Ascending aorta (tissue), 2 donors: ENCODE measurements at regions of chr20 and their contacts with region 1.

Region 1: GRCh38 chr20:10654630-10655029 is 19.2 kb downstream of the JAG1 start:
- DNase-seq: no peak
- H3K4me3 ChIP-seq: peak overlapping the region in 1 of 2 donors; percentile 54
- H3K27ac ChIP-seq: peak overlapping the region; percentile 93 to 100
- H3K4me1 ChIP-seq: peaks cover 28 to 96% of the 10 kb centered on the region in 2 donors
- H3K27me3 ChIP-seq: no peaks in the 10 kb centered on the region
- CTCF ChIP-seq: no peak

Region 2: DNA sequence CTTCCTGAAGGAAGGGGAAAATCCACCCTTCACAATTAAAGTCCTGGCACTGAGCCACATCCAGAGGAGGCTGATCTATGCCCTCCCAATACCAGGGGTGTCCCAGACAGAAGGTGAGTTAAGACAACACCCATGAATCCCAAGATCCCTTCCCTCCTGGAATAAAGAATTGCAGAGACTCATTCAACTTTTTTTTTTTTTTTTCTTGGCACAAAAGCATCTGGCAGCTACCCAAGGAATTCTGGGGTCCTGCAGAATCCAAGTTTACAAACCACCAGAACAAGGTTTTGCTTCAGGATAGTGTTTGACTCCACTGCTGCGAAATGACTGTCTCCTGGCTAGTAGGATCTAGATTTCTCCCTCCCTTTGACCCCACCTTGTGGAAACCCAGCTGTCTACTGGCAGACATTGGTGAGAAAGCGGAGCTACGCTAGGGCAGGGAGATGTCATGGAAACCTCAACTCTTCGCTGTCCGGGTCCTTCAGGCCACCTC is 18.3 kb before region 1 on chr20:
- intact Hi-C with region 1: loop called (anchors 2 kb)
- DNase-seq: peak in 1 of 2 donors; percentile 68
- H3K4me3 ChIP-seq: peak overlapping the region in 1 of 2 donors; percentile 53
- H3K27ac ChIP-seq: peak overlapping the region; percentile 93 to 100
- H3K4me1 ChIP-seq: peaks cover 29 to 57% of the 10 kb centered on the region in 2 donors
- H3K27me3 ChIP-seq: no peaks in the 10 kb centered on the region
- CTCF ChIP-seq: no peak

Region 3: DNA sequence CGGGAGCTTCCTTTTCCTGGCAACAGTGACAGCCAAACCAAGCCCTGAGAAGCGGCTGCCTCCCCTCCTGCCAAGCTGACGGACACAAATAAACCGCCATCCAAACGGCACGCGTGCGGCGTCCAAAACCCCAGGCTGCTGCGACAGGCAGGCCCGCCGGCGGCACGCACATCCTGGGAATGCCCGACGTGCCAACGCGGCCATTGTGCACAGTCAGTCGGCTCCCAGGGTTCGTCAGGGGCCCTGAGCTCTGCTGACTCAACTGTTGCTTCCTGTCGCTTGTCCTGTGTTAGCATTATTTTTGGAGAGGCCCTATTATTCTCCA is 12.4 kb after region 1 on chr20:
- intact Hi-C with region 1: loop called (anchors 2 kb)
- DNase-seq: peak in 1 of 2 donors; percentile 84
- H3K4me3 ChIP-seq: peak overlapping the region; percentile 39 to 86
- H3K27ac ChIP-seq: peak overlapping the region; percentile 93 to 100
- H3K4me1 ChIP-seq: peaks cover 23 to 61% of the 10 kb centered on the region in 2 donors
- H3K27me3 ChIP-seq: no peaks in the 10 kb centered on the region
- CTCF ChIP-seq: no peak

Region 4: GRCh38 chr20:10769700-10770099 is 115.1 kb after region 1 on chr20:
- intact Hi-C with region 1: no loop called
- DNase-seq: no peak
- H3K4me3 ChIP-seq: no peak overlapping the region
- H3K27ac ChIP-seq: no peak overlapping the region
- H3K4me1 ChIP-seq: no peaks in the 10 kb centered on the region
- H3K27me3 ChIP-seq: no peaks in the 10 kb centered on the region
- CTCF ChIP-seq: no peak

Region 5: GRCh38 chr20:11219192-11219591 is 564.6 kb after region 1 on chr20:
- intact Hi-C with region 1: no loop called
- DNase-seq: no peak
- H3K4me3 ChIP-seq: no peak overlapping the region
- H3K27ac ChIP-seq: no peak overlapping the region
- H3K4me1 ChIP-seq: peaks cover 0 to 21% of the 10 kb centered on the region in 2 donors
- H3K27me3 ChIP-seq: no peaks in the 10 kb centered on the region
- CTCF ChIP-seq: no peak